Activated CD8-positive, alpha-beta T cell treated with anti-CD3 and anti-CD28 coated beads for 36 hours (primary cell): ENCODE measurements at regions of chr12 and their contacts with region 1.

Region 1: GRCh38 chr12:25377469-25378177 is 126.9 kb upstream of the KRAS start:
- DNase-seq: peak; percentile 70
- ATAC-seq: peak; percentile 93
- H3K4me3 Mint-ChIP-seq: peak overlapping the region; percentile 36
- H3K27ac Mint-ChIP-seq: peak overlapping the region; percentile 84
- H3K4me1 Mint-ChIP-seq: peaks cover 61% of the 10 kb centered on the region
- H3K27me3 Mint-ChIP-seq: no peaks in the 10 kb centered on the region
- CTCF ChIP-seq: no peak

Region 2: DNA sequence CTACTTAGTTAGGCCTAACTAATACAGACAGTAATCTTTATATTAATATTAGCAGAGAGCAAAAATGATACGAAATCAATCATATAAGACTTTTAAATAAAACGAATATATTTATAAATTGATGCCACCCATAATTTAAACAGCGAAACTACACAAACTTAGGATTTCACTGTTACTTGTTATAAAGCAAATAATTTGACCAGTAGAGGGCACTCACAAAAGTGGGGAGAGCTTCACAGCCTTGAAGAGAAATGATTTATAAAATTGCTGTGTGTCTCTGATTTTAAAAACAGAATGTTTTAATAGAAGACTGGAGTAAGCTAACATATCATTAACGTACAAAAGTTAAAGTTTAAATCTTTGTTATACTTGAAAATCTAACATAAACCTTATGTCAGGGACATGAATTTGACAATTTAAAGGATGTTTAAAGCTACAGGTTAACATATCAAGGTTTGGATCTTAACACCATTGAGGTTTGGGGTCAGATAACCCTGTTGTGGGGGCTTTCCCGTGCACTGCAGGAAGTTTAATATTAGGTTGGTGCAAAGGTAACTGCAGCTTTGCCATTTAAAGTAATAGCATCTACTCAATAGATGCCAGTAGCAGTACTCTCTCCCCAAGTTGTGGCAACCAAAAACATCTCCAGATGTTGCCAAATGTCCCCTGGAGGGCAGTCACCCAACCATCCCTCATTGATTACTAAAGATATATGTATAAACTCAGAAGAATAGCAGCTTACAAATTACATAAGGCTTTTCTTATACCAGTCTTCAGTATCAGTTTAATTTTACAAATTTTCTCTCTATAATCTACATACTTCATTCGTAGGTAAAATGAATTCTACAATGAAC is 136.2 kb before region 1 on chr12:
- CTCF ChIA-PET with region 1: interaction called, 16 read pairs
- POLR2A ChIA-PET with region 1: interaction called, 7 read pairs
- intact Hi-C with region 1: no loop called
- DNase-seq: peak; percentile 65
- ATAC-seq: peak; percentile 90
- H3K4me3 Mint-ChIP-seq: no peak overlapping the region
- H3K27ac Mint-ChIP-seq: no peak overlapping the region
- H3K4me1 Mint-ChIP-seq: peaks cover 56% of the 10 kb centered on the region
- H3K27me3 Mint-ChIP-seq: no peaks in the 10 kb centered on the region
- CTCF ChIP-seq: peak; percentile 83

Region 3: GRCh38 chr12:25256826-25257225 is 120.8 kb before region 1 on chr12:
- CTCF ChIA-PET with region 1: no interaction called
- POLR2A ChIA-PET with region 1: no interaction called
- intact Hi-C with region 1: no loop called
- DNase-seq: no peak
- ATAC-seq: no peak
- H3K4me3 Mint-ChIP-seq: no peak overlapping the region
- H3K27ac Mint-ChIP-seq: no peak overlapping the region
- H3K4me1 Mint-ChIP-seq: peaks cover 22% of the 10 kb centered on the region
- H3K27me3 Mint-ChIP-seq: no peaks in the 10 kb centered on the region
- CTCF ChIP-seq: no peak

Region 4: DNA sequence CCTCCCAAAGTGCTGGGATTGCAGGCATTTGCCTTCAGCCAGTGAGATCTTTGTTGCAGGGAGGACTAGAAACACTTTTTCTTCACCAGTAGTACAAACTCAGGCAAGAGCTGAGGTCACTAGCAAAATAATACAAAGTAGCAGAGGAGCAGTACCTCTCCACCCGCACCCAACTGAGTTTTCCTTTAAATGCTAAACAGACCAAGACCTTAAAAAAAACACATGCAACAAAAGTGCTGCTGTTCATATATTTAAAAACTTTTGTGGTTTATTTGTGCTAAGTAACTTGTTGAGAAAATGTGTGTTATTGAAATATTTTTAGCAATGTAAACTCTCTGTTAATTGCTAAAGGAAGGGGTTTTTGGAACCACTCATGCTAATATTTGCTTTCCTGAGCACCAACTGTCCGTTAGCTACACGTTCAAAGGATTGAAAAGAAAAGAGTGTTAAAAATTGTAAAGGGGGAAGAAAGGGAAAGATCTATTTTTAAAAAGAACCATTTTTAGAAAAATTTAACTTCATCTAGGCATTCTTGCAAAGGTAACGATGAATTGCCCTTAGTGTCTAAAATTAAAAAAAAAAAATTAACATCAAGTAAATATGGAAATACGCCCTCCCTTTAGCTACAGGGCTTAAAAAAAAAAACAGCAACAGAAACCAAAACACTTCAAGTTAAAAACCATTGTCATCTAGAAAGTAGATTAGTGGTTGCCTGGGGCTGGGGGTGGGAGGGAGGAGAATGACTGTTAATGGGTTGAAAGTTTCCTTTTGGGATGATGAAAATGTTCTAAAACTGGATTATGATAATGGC is 12.9 kb before region 1 on chr12:
- CTCF ChIA-PET with region 1: interaction called, 10 read pairs
- POLR2A ChIA-PET with region 1: interaction called, 5 read pairs
- intact Hi-C with region 1: no loop called
- DNase-seq: peak; percentile 85
- ATAC-seq: peak; percentile 86
- H3K4me3 Mint-ChIP-seq: peak overlapping the region; percentile 44
- H3K27ac Mint-ChIP-seq: peak overlapping the region; percentile 83
- H3K4me1 Mint-ChIP-seq: peaks cover 23% of the 10 kb centered on the region
- H3K27me3 Mint-ChIP-seq: peaks cover 1% of the 10 kb centered on the region
- CTCF ChIP-seq: no peak

Region 5: GRCh38 chr12:25404955-25405354 is 27.3 kb after region 1 on chr12:
- CTCF ChIA-PET with region 1: no interaction called
- POLR2A ChIA-PET with region 1: no interaction called
- intact Hi-C with region 1: no loop called
- DNase-seq: no peak
- ATAC-seq: no peak
- H3K4me3 Mint-ChIP-seq: no peak overlapping the region
- H3K27ac Mint-ChIP-seq: no peak overlapping the region
- H3K4me1 Mint-ChIP-seq: no peaks in the 10 kb centered on the region
- H3K27me3 Mint-ChIP-seq: no peaks in the 10 kb centered on the region
- CTCF ChIP-seq: no peak

Region 6: DNA sequence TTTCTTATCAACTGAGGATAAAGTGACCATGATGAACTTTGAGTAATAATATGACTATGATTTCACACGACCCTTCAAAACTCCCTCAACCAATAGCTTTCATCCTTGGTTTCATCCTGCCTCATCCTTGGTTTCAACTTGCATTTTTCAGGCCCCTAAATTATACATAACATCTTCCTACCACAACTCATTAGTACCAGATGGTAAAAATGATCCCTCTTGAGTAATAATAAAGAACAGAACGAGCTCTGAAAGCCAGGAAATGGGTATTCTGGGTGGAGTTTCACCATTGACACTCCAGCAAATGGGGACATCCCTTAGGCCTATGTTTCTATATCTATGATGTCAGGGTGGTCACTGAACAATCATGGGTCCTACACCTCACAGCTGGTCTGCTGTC is 247.5 kb after region 1 on chr12:
- CTCF ChIA-PET with region 1: no interaction called
- POLR2A ChIA-PET with region 1: no interaction called
- intact Hi-C with region 1: no loop called
- DNase-seq: no peak
- ATAC-seq: no peak
- H3K4me3 Mint-ChIP-seq: no peak overlapping the region
- H3K27ac Mint-ChIP-seq: no peak overlapping the region
- H3K4me1 Mint-ChIP-seq: no peaks in the 10 kb centered on the region
- H3K27me3 Mint-ChIP-seq: no peaks in the 10 kb centered on the region
- CTCF ChIP-seq: no peak